ENCODE measurements at regions of chr6 and their contacts with region 1.

Region 1: DNA sequence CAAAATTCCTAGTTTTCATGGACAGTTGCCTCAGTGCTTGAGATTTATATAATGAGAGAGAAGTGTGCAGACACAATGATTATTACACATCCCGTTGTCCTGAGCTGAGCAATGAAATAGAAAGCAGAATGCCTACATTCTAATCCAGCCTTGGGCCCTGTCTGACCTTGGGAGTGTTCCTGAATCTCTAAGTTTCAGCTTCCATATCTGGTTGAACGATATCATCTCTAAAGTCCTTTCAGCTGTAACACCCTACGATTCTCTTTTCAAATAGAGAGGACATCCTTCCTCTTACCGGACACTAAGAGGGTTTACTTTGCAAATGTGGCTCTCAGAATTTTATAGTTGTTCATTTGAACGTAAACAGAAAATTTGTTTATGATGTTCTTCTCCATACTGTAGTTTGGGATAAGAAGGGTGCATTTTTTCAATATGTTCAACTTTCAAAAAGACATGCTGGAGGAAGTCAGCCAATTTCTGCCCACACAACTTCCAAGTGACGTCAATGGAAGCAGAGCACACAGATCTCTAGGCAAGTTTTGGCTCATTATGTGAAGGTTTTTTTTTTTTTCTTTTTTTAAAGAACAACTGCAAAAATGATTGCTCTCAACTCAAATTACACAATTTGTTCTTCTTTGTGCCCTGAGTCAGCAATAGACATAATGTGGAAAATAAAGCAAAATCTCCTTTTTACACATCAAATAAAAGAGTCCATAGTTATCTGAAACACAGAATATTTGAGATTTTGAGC is 50.4 kb downstream of the PDE7B start:
- DNase-seq: peak in 1 of 2 donors; percentile 19
- ATAC-seq: peak; percentile 57 to 63
- H3K4me3 ChIP-seq: peak overlapping the region in 1 of 4 donors; percentile 9
- H3K27ac ChIP-seq: peak overlapping the region; percentile 51 to 67 (median 66)
- H3K4me1 ChIP-seq: peaks cover 6 to 12% of the 10 kb centered on the region in 2 donors
- H3K27me3 ChIP-seq: no peaks in the 10 kb centered on the region
- CTCF ChIP-seq: no peak
- POLR2A ChIP-seq: no peak

Region 2: DNA sequence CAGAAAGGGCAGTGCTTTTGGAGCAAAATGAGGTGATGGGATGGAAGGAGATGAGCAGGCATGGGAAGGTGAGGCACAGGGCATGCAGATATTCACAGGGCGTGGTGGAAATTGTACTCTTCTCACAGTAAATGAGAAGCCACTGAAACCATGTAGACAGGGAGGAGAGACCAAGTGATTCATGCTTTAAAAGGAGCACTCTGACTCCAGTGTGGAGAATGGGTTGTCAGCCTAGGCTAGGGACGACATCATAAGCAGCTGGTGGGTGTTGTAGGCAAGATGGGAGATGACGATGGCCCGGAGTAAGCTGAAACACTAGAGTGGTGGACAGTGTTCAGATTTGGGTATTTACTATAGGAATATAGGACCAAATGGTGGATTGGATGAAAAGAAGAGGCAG is 32.1 kb before region 1 on chr6:
- in situ Hi-C with region 1: no loop called
- intact Hi-C with region 1: loop called (anchors 5 kb)
- DNase-seq: no peak
- ATAC-seq: no peak
- H3K4me3 ChIP-seq: no peak overlapping the region
- H3K27ac ChIP-seq: no peak overlapping the region
- H3K4me1 ChIP-seq: peaks cover 0 to 16% of the 10 kb centered on the region in 2 donors
- H3K27me3 ChIP-seq: no peaks in the 10 kb centered on the region
- CTCF ChIP-seq: no peak
- POLR2A ChIP-seq: no peak